ENCODE measurements at regions of chr13 and their contacts with region 1.

Region 1: DNA sequence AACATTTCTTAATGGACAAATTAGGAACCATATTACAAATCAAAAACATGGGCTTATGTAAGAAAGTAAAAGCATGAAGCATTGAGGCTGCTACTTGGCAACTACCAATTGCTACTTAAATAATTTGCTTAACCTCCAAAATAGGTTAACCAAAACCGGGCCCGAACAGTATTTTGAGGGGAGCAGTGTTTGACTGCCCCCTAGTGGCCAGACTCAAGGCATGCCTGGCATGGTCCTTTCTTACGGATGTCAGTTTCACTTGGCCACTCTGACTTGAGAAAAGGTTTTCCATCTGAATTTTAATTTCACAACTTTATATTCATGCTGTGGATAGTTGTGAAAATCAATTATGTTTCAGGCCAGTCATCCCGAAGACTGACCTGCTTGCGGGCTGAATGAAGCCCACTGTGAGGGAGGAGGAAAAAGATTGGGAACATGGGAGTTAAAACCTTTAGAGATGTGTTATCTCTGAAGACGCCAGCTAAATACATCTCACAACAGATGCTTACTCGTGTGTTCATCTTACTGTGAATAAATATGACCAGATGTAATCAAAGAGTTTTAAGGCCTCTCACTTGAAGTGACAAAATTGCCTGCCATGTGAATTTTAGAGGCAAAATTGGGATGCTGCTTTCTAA is 2.9 kb downstream of the RXFP2 start:
- DNase-seq: peak; percentile 64
- H3K4me3 ChIP-seq: no peak overlapping the region
- H3K27ac ChIP-seq: no peak overlapping the region
- H3K4me1 ChIP-seq: no peaks in the 10 kb centered on the region
- H3K27me3 ChIP-seq: peaks cover 0 to 2% of the 10 kb centered on the region in 2 experiments
- CTCF ChIP-seq: peak; percentile 88 to 95
- POLR2A ChIP-seq: no peak

Region 2: DNA sequence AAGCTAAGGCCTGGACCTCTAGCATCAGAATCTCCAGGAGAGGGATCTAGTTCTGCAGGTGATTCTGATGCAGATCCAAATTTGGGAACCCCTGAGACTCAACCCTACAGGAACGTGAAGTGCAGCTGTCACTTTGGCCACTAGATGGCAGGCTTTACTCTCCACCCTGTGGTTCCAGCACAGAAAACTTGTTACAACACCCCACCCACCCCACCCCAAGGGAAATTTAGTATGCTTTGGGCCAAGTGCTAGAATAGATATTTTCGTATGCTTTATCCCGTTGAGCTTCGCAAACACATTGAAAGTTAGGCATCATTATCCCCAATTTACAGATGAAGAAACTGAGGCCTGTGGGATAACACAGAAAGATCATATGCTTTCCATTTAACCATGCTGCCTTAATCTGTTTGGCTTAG is 310.5 kb before region 1 on chr13:
- CTCF ChIA-PET with region 1: interaction called, 25 read pairs
- POLR2A ChIA-PET with region 1: no interaction called
- dilution Hi-C with region 1: no loop called
- intact Hi-C with region 1: loop called (anchors 1 kb)
- DNase-seq: peak; percentile 33
- H3K4me3 ChIP-seq: no peak overlapping the region
- H3K27ac ChIP-seq: no peak overlapping the region
- H3K4me1 ChIP-seq: peaks cover 5% of the 10 kb centered on the region
- H3K27me3 ChIP-seq: peaks cover 5 to 9% of the 10 kb centered on the region in 2 experiments
- CTCF ChIP-seq: peak; percentile 46 to 84
- POLR2A ChIP-seq: no peak

Region 3: GRCh38 chr13:31518645-31519044 is 223.6 kb before region 1 on chr13:
- CTCF ChIA-PET with region 1: no interaction called
- POLR2A ChIA-PET with region 1: no interaction called
- dilution Hi-C with region 1: no loop called
- intact Hi-C with region 1: no loop called
- DNase-seq: no peak
- H3K4me3 ChIP-seq: no peak overlapping the region
- H3K27ac ChIP-seq: no peak overlapping the region
- H3K4me1 ChIP-seq: no peaks in the 10 kb centered on the region
- H3K27me3 ChIP-seq: peaks cover 8 to 18% of the 10 kb centered on the region in 2 experiments
- CTCF ChIP-seq: no peak
- POLR2A ChIP-seq: no peak

Region 4: DNA sequence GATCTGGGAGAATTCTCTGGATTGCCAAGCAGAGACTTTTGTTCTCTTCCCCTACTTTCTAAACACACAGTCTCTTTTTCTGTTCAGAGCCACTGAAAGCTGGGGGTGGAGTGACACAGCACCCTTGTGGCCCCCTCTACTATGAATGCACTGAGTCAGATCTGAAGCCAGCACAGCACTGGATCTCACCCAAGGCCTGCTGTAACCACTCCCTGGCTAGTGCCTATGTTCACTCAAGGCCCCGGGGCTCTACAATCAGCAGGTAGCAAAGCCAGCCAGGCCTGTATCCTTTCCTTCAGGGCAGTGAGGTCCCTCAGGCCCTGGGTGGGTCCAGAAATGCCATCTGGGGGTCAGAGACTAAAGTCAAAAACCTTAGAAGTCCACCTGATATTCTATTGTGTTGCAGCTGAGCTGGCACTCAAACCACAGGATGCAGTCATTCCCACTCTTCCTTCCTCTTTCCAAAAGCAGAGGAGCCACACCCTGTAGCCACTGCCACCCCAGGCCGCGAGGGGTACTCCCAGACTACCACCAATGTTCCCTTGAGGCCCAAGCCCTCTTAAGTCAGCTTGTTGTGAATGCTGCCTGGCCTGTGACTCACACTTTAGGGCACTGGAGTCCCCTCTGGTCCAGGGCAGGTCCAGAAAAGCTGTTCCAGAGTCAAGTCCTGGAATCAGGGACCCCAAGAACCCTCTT is 113.0 kb before region 1 on chr13:
- CTCF ChIA-PET with region 1: interaction called, 6 read pairs
- POLR2A ChIA-PET with region 1: no interaction called
- dilution Hi-C with region 1: no loop called
- intact Hi-C with region 1: loop called (anchors 2 kb)
- DNase-seq: peak; percentile 33
- H3K4me3 ChIP-seq: no peak overlapping the region
- H3K27ac ChIP-seq: peak overlapping the region; percentile 11
- H3K4me1 ChIP-seq: peaks cover 31% of the 10 kb centered on the region
- H3K27me3 ChIP-seq: no peaks in the 10 kb centered on the region
- CTCF ChIP-seq: no peak
- POLR2A ChIP-seq: no peak

Region 5: DNA sequence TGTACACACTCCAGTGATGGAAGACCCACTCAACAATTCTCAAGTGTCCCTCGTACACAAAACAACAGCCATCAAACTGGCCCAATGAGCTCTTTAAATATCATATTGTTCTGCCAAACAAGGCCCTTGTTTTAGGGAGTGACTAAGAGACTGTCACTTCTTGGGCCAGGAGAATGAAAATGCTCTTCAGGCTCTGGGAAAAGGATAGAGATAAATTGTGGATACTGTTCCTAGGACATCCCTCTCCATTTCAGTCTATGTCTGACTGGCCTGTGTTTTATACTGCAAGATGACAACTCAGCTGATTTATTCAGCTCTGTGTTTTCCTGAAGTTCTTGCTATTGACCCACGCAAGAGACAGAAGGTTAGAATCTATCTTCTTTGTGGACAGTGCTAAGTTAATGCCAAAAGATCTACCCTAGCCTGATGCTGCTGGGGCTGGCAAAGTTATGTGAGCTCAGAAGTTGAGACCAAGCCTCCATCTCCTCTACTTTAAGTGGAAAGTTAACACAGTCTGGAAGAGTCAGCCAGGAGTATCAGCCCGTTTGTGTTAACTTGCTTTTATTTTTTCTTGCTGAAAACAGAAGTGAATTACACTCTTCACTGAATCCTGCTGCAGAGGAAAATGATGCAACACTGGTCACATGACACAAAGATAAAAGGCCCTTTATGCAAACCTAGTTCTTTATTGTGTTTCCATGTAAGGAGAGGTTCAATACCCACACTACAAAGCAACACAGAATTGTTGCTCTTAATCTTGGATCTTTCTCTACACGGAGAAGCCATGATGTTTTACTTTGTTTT is 304.0 kb after region 1 on chr13:
- CTCF ChIA-PET with region 1: no interaction called
- POLR2A ChIA-PET with region 1: no interaction called
- dilution Hi-C with region 1: no loop called
- intact Hi-C with region 1: no loop called
- DNase-seq: peak; percentile 21
- H3K4me3 ChIP-seq: no peak overlapping the region
- H3K27ac ChIP-seq: no peak overlapping the region
- H3K4me1 ChIP-seq: peaks cover 4% of the 10 kb centered on the region
- H3K27me3 ChIP-seq: no peaks in the 10 kb centered on the region
- CTCF ChIP-seq: no peak
- POLR2A ChIP-seq: no peak